Body of pancreas (tissue), 4 donors: ENCODE measurements at regions of chr11 and their contacts with region 1.

Region 1: DNA sequence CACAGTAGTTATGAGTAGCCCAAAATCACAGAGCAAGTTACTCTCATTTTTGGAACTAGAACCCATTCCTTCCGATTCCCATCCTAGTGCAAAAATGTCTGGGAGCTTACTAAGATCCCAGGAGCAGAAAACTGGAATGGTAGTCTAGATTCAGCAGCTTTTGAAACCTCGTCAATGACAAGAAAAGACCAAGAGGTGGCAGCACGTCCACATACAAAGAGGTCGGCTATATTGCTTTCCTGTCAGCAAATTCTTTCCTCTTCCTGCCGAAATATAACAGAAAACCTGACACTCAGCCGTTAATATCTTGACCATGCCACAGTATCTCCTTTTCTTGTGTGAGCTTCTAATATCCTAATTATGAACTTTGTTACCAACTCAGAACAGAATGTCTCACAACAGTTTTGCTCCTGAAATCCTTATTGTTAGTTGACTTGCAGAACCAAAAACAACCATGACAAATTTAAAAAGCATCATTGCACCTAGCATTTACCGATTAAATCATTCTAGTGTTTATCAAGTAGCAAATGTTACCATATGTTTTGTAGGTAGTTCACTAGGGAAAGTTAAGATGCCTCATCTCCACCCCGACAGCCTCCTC is 92.8 kb upstream of the OR9G4 start:
- DNase-seq: peak; percentile 48 to 60 (median 58)
- ATAC-seq: peak; percentile 78
- H3K4me3 ChIP-seq: no peak overlapping the region
- H3K27ac ChIP-seq: no peak overlapping the region
- H3K4me1 ChIP-seq: no peaks in the 10 kb centered on the region
- H3K27me3 ChIP-seq: no peaks in the 10 kb centered on the region
- CTCF ChIP-seq: peak; percentile 37 to 81 (median 73)
- POLR2A ChIP-seq: no peak

Region 2: DNA sequence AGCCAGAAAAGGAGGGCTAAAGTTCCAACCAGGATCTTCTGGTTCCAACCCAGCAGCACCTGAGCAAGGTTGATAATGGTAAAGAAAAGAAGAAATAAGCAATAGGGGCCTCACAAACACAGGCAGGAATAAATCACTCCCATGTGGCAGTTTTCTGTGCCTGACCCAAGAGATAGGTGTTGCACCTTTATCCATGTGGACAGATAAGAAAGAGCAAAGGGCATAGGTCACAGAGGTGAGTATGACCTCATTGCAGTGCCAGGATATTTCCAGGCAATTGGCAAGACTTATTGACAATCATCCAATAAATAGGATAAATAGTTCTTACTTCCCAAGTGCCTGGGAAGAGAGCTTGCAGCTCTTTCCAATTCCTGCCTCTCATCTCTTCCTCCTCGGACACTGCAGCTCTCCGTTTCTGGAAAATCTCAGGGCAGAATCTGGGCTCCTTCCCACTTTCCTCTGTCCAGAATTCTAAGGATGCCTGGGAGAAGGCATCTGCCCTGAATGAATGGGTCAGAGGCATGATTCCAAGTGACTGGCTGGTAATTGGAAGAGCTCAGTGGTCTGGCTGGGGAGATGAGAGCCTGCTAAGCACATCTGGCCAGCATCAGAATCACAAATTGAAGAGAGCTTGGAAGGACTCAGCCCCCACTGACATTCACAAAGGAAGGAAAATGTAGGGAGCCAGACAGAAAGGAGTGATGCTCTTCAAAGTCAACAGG is 326.0 kb after region 1 on chr11:
- intact Hi-C with region 1: no loop called
- DNase-seq: peak in 1 of 4 donors; percentile 16
- ATAC-seq: no peak
- H3K4me3 ChIP-seq: no peak overlapping the region
- H3K27ac ChIP-seq: no peak overlapping the region
- H3K4me1 ChIP-seq: no peaks in the 10 kb centered on the region
- H3K27me3 ChIP-seq: no peaks in the 10 kb centered on the region
- CTCF ChIP-seq: no peak
- POLR2A ChIP-seq: no peak

Region 3: DNA sequence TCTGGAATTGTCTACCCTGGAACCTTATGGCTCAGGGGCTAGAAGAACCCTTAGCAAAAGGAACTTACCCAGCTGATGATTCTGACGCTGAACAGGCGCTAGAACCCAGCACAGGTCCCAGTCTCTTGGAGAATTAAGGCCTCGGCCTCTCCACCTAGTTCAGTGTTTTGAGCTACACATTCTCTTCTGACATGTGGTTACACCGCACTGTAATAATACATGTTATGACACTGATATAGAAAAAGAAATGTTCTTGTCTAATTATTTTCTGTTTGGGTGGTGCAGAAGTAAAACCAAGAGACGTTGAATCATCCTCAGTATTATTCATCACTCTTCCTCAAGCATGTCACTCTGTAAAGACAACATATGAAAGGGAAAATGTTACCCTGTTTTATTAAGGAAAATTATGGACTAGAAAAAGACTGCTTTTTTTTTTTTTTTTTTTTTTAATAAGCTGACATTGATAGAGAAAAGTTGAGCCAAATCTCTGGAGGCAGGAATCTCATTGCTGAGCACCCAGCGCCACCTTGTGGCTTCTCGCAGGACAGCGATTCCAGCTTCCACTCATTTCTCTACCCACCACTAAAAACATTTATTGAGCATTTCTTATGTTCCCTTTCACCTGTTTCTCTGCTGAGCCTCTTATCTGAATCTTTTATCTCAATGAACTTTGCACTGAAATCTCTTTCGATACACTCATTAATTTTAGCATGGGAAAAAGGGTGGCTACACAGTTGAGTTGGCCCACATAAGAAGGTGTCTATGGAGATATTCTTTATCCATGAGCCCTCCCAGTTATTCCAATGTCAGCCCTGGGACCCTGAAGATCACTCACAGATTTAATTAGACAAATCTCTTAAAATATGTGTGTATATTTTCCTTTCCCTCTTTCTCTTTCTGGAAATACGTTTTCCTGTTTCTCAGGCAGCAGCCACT is 408.3 kb after region 1 on chr11:
- intact Hi-C with region 1: loop called (anchors 5 kb)
- DNase-seq: peak; percentile 62 to 75 (median 66)
- ATAC-seq: peak; percentile 74
- H3K4me3 ChIP-seq: no peak overlapping the region
- H3K27ac ChIP-seq: no peak overlapping the region
- H3K4me1 ChIP-seq: no peaks in the 10 kb centered on the region
- H3K27me3 ChIP-seq: no peaks in the 10 kb centered on the region
- CTCF ChIP-seq: peak; percentile 68 to 94 (median 82)
- POLR2A ChIP-seq: no peak